ENCODE measurements at regions of chr2 and their contacts with region 1.

Region 1: DNA sequence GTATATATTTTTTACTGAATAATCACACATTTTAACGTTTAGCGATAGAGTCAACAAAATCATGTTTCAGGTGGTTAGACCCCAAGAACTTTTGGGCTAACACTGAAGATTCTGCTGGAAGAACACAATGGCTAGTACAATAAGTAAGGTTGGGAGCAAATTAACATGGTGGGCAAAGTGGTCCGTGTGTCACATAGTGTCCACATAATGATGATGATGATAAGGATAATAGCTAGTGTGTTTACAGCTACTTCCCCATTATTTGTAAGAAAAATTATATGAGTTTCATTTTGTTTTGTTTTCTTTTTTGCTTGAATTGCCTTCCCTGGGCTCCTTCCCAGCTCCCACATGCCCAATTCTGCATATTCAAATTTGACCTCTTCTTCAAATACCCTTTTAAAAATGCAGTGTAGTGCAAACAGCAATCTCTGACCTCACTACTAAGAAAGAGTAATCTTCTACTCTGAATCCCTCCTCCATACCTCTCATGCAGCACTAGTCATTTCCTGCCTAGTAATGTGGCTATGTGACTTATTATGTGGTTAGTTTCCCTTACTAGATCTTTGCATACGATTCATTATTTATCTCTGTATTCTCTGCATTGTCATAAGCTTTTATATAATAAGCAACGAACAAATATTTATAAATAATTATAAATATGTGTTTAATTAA is 16.9 kb upstream of the VPS54 start:
- DNase-seq: peak; percentile 30
- H3K4me3 Mint-ChIP-seq: peak overlapping the region; percentile 19
- H3K27ac Mint-ChIP-seq: peak overlapping the region; percentile 87
- H3K4me1 Mint-ChIP-seq: peaks cover 48% of the 10 kb centered on the region
- H3K27me3 Mint-ChIP-seq: no peaks in the 10 kb centered on the region

Region 2: GRCh38 chr2:63530880-63531279 is 505.3 kb before region 1 on chr2:
- intact Hi-C with region 1: no loop called
- DNase-seq: no peak
- H3K4me3 Mint-ChIP-seq: no peak overlapping the region
- H3K27ac Mint-ChIP-seq: no peak overlapping the region
- H3K4me1 Mint-ChIP-seq: no peaks in the 10 kb centered on the region
- H3K27me3 Mint-ChIP-seq: no peaks in the 10 kb centered on the region

Region 3: DNA sequence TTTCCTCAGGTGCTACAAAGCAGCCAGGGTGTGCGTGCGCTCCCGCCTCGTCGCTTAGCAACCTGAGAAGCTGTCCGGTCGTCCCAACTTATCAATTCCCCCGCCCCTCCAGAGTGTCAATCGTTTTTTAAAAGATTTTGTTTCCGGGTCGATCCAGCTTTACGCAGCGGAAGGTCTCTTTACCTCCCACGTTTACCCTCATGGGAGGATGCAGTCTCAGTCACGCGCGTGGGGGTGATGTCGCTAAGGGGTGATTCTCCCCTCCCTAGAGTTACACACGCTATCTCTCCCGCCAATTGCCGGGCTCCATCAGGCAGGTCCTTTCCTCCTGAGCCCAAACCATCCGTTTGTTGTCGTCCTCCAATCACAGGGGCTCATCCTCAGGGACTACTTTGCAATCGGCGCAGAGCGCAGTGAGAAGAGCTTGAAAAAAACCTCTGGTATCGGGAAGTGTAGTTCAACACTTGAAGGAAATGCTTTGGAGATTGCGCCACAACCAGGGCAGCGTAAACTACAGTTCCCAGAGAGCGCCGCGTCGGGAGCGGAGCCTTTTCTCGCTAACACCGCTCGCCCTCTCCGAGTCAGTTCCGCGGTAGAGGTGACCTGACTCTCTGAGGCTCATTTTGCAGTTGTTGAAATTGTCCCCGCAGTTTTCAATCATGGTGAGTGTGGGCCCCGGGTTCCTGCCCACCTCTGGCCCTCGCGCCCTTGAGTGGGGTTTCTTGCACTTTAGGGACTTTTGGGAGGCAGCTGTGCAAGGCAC is 447.6 kb before region 1 on chr2 and contains the starts of genes MDH1 and WDPCP:
- intact Hi-C with region 1: loop called (anchors 10 kb)
- DNase-seq: peak; percentile 92
- H3K4me3 Mint-ChIP-seq: peak within 1 kb of the TSS; percentile 99
- H3K27ac Mint-ChIP-seq: peak within 1 kb of the TSS; percentile 91
- H3K4me1 Mint-ChIP-seq: peaks cover 32% of the 10 kb centered on the region
- H3K27me3 Mint-ChIP-seq: no peaks in the 10 kb centered on the region
- total RNA-seq, gene MDH1: 212 and 226 TPM in 2 replicates
- total RNA-seq, gene WDPCP: 5.5 and 6.1 TPM in 2 replicates

Region 4: GRCh38 chr2:63983986-63984605 is 52.1 kb before region 1 on chr2:
- intact Hi-C with region 1: loop called (anchors 5 kb)
- DNase-seq: no peak
- H3K4me3 Mint-ChIP-seq: no peak overlapping the region
- H3K27ac Mint-ChIP-seq: no peak overlapping the region
- H3K4me1 Mint-ChIP-seq: peaks cover 29% of the 10 kb centered on the region
- H3K27me3 Mint-ChIP-seq: no peaks in the 10 kb centered on the region

Region 5: DNA sequence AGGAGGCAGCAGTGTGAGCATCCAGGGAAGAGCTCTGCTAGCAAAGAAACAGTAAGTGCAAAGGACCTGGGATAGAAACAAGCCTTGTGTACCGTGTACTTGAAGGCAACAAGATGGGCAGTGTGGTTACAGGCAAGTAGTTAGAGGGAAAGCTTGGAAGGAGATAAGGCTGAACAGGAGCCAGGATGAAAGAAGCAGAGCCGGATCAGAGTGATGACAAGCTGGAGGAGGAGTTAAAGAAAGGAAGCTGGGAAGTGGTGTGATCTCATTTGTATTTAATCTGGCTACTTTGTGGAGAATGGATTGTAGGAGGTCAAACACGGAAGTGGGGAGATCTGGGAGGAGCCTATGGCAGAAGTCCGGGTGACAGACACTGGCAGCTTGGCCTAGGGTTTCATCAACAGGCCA is 27.8 kb after region 1 on chr2:
- intact Hi-C with region 1: loop called (anchors 2 kb)
- DNase-seq: no peak
- H3K4me3 Mint-ChIP-seq: no peak overlapping the region
- H3K27ac Mint-ChIP-seq: peak overlapping the region; percentile 30
- H3K4me1 Mint-ChIP-seq: peaks cover 24% of the 10 kb centered on the region
- H3K27me3 Mint-ChIP-seq: no peaks in the 10 kb centered on the region

Region 6: DNA sequence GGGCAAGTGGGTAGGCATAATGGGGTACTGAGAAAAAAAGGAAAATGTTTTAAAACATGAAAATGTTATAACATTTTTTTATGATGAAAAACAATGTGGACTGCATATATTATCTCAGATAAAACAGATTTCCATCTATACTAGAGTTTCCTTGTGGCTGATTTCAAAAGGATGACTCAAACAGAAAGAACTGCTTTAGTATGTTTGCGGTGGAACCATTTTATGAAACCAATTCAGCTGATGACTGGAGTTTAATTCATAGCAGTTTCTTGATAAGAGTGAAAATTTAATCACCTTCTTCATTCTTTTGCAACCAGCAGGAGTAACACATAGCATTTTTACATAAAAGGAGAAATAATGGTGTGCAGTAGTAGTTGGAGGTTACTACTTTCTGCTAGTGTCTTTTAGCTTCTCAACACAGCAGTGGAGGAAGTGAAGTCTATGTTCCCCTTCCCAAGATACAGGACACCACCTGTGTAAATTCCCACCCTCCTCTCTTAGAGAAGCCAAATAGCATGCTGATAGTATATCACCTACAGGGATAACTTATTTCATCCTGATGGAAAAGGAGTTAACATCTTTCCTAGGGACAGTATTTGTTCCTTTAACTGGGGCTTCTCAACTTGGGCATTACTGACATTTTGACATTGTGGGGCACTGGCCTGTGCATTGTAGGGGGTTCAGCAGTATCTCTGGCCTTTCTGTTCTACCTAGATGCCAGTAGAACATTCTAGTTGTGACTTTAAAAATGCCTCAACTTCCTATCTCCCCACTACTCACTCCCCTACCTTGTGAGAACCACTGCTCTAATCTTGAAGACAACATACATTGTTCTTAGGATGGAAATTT is 78.1 kb after region 1 on chr2:
- intact Hi-C with region 1: loop called (anchors 1 kb)
- DNase-seq: no peak
- H3K4me3 Mint-ChIP-seq: peak overlapping the region; percentile 6
- H3K27ac Mint-ChIP-seq: peak overlapping the region; percentile 74
- H3K4me1 Mint-ChIP-seq: peaks cover 55% of the 10 kb centered on the region
- H3K27me3 Mint-ChIP-seq: peaks cover 2% of the 10 kb centered on the region

Region 7: GRCh38 chr2:64144057-64145013 is 108.2 kb after region 1 on chr2 and contains the start of gene PELI1:
- intact Hi-C with region 1: loop called (anchors 1 kb)
- DNase-seq: peak; percentile 89
- H3K4me3 Mint-ChIP-seq: peak within 1 kb of the TSS; percentile 89
- H3K27ac Mint-ChIP-seq: peak within 1 kb of the TSS; percentile 91
- H3K4me1 Mint-ChIP-seq: peaks cover 23% of the 10 kb centered on the region
- H3K27me3 Mint-ChIP-seq: no peaks in the 10 kb centered on the region
- total RNA-seq, gene PELI1: 21.6 and 25.1 TPM in 2 replicates